GM18951 (cell line): ENCODE measurements at regions of chr22 and their contacts with region 1.

Region 1: GRCh38 chr22:25452116-25452700 is 112.3 kb upstream of the GRK3 start:
- POLR2A ChIP-seq: no peak

Region 2: DNA sequence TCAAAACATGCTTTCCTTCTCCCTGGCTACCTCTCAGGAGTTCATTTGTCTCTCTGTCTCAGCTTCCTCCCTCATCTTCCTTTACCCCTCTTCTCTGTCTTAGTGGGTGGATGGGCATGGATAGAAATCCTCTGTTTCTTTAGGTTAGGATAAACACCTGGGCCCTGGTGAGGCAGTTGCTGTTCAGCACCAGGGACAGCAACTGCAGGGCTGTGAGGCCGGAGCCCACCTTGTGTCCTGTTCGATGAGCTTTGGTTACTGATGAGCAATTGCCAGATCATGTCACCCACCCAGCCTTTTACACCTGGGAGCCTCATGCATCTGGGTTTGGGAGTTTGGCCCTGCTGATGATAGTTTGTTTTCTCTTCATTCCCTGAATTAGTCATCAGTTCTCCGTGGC is 258.7 kb before region 1 on chr22:
- in situ Hi-C with region 1: no loop called
- POLR2A ChIP-seq: no peak

Region 3: DNA sequence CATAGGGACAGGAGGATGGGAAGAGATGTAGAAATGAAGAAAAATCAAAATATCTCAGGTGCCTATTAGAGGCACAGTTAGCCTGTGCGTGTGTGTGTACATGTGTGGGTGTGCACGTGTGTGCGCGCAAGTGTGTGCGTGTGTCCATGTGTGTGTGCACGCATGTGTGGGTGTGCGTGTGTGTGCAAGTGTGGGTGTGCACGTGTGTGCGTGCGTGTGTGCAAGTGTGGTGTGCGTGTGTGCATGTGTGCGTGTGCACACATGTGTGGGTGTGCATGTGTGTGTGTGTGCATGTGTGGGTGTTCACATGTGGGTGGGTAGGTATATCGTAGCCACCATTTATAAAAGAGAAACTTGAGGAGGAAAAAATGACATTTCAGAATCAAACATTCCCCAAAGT is 223.4 kb before region 1 on chr22:
- in situ Hi-C with region 1: loop called (anchors 5 kb)
- POLR2A ChIP-seq: no peak